Ovary (tissue), 10 donors: ENCODE measurements at regions of chr4 and their contacts with region 1.

Region 1: GRCh38 chr4:23392860-23393458 is 496.9 kb downstream of the PPARGC1A start:
- DNase-seq: no peak
- H3K4me3 ChIP-seq: no peak overlapping the region
- H3K27ac ChIP-seq: no peak overlapping the region
- H3K4me1 ChIP-seq: peaks cover 2% of the 10 kb centered on the region
- H3K27me3 ChIP-seq: no peaks in the 10 kb centered on the region
- CTCF ChIP-seq: no peak
- EP300 ChIP-seq: no peak
- POLR2A ChIP-seq: no peak

Region 2: DNA sequence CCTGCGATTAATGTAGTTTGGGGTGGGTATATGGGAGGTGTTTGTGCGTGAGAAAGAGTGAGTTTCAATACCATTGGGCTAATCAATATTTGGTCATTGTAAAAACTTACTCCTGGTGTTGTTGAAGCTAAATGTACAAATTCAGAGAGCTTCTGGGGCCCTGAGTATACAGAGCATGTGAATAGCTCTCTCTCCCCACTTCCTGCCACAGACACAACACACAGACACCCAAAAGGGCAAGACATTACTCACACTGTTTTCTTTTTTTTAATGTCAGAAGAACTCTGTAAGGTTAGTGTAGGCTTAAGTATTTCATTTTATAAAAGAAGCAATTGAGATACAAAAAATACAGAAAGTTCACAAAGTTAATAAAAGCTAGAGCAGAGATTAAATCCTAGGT is 1293.1 kb before region 1 on chr4:
- intact Hi-C with region 1: loop called in 1 of 4 experiments (anchors 5 kb)
- DNase-seq: no peak
- H3K4me3 ChIP-seq: no peak overlapping the region
- H3K27ac ChIP-seq: no peak overlapping the region
- H3K4me1 ChIP-seq: no peaks in the 10 kb centered on the region
- H3K27me3 ChIP-seq: no peaks in the 10 kb centered on the region
- CTCF ChIP-seq: no peak
- EP300 ChIP-seq: no peak
- POLR2A ChIP-seq: no peak

Region 3: DNA sequence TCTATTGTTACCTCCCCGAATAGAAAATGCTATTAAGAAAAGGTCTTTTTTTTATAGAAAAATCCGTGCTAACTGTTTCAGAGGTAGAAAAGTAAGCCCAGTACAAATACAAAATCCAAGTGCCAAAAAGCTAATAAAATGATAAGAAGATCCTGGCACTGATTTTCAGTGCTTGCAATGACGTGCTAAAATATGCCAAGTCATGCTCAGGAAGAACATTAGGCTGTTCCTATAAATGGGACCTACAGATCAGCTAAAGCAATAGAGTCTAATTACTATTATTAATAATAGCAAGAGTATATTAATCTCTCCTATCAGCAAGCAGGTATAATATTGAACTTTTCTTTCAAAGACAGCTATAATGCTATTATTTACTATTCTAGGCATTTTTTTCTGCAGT is 191.1 kb after region 1 on chr4:
- intact Hi-C with region 1: no loop called
- DNase-seq: no peak
- H3K4me3 ChIP-seq: no peak overlapping the region
- H3K27ac ChIP-seq: no peak overlapping the region
- H3K4me1 ChIP-seq: peaks cover 7% of the 10 kb centered on the region
- H3K27me3 ChIP-seq: no peaks in the 10 kb centered on the region
- CTCF ChIP-seq: no peak
- EP300 ChIP-seq: no peak
- POLR2A ChIP-seq: no peak